RWPE1 (cell line): ENCODE measurements at regions of chr9 and their contacts with region 1.

Region 1: DNA sequence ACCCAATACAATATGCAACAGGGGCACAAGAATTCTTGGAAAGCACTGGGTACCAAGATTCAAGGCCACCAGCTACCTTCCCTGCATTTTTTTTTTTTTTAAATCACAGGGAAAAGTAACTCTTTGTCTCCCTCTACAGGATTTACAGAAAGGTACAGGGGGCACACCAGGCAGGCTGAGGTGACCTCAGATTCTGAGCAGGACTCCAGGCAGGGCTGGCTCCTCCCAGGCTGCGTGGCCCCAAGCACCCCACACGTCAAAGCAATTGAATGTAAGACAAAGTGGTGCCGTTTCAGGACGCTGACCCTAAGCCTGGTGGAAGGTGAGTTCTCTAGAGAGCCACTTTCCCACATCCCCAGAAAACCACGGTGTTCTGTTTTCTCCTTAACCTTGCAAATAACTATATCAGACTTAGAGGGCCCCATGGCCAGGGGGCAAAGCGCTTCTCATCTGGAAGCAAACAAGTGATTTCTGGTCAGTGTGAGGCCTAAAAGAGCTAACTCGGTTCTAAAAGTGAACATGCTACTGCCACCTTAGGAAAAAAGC is 222.6 kb downstream of the ROR2 start:
- DNase-seq: peak; percentile 87
- H3K27ac ChIP-seq: no peak overlapping the region
- CTCF ChIP-seq: peak; percentile 95

Region 2: GRCh38 chr9:91659529-91660495 is 67.6 kb before region 1 on chr9:
- CTCF ChIA-PET with region 1: interaction called, 22 read pairs
- POLR2A ChIA-PET with region 1: no interaction called
- DNase-seq: peak; percentile 67
- H3K27ac ChIP-seq: no peak overlapping the region
- CTCF ChIP-seq: peak; percentile 63

Region 3: DNA sequence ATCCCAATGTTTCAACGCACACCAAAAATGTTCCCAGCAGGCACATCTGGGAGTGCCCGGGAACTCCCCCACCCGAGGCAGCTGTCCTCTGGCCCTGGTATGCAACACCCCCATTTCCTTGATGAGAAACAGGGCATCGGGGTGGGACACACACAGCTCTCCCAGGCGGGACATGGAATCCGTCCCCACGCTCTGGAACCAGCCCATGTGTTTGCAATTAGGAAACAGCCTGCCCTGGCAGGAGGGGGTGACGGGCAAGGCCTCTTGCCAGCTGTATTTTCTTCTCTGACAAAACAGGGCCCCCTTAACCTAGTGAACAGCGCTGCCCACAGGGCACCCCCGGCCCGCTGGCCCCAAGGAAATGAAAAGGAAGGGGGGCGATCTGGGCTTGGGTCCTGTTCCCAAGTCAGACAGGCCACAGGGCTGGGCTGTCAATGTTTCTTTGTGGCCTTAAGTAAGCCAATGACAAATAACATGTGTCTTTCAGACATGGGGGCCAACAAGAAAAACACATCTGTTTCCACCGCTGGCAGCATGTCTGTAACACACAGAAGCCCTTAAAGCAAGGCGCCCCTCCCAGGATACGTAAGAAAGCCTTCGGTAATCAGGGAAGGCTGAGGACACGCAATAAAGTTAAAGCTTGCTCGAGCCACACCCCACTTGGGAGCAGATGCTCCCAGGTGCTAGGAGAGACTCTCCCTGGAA is 97.4 kb after region 1 on chr9:
- CTCF ChIA-PET with region 1: no interaction called
- POLR2A ChIA-PET with region 1: no interaction called
- DNase-seq: no peak
- H3K27ac ChIP-seq: no peak overlapping the region
- CTCF ChIP-seq: no peak